HCT116 (cell line): ENCODE measurements at regions of chr3 and their contacts with region 1.

Region 1: DNA sequence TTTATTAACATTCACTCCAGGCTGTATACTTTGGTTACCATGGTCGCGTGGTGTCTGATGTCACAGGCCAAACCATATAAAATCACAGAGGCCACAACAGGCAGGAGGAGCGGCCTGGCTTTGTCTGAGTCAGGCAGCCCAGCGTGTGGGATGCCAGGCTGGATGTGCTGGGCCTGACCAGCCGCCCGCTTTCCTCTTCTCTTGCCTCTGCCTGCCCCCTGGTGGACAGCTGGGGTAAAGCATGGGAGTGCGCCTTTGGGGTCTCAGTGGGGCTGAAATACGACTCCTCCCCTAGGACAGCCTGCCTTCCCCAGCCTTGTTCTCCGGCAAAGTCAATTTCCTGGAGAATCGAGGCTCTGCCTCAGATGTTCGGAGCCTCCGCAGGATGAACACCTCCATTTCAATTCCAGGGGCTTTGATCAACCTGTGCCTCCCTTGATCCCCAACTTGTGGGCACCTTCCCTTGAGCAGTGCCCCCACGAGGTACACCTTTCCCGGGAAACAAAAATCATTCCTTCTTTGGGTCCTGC is 78.2 kb downstream of the CCNL1 start:
- DNase-seq: peak; percentile 85
- ATAC-seq: peak; percentile 92
- H3K4me3 ChIP-seq: peak overlapping the region; percentile 3 to 22; a peak in 2 of 4 replicates
- H3K27ac ChIP-seq: no peak overlapping the region
- H3K4me1 ChIP-seq: peaks cover 5 to 45% of the 10 kb centered on the region in 2 experiments
- H3K27me3 ChIP-seq: no peaks in the 10 kb centered on the region
- CTCF ChIP-seq: peak in 2 of 3 experiments; percentile 94 to 99; a peak in 4 of 6 replicates
- POLR2A ChIP-seq: no peak
- RAD21 ChIP-seq: no peak

Region 2: DNA sequence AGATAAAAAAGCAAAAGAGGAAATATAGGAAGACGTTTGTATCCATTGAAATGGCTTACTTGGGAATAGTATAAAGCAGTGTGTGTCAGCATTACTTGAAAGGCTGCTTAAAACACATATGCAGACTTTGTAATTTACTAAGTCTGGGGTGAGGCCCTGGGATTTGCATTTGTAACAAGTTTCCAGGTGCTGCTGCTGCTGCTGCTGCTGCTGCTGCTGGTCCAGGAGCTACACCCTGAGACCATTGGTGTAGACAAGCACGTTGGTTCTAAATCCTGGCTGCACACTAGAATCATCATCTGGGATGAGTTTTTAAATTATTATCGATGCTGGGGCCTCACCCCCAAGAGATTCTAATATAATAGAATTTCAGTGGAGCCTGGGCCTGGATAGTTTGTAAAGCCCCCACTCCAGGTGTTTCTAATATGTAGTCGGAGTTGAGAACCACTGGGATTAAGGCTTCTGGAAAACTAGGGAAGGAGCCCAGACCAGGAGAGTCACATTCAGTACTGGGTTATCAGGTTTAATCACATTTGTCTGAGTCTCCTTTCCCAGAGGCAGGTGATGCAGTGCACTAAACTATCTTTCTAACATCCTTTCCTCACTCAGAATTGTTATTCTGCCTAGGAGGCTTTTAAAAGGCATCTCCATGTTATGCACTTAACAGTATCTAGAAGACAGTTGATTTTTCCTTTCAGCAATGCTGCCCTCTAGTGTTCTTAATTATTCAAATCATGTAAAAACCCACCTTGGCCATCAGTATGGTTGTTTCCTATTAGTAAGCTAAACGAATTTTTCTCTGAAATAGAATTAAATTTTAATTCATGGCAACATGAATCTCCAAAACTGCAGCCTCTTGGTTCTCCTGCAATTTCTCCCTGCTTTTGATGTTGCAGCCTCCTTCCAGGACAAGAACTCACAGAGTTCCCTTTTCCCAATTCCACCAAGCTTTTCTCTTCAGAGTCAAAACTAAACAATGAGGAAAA is 572.3 kb before region 1 on chr3:
- CTCF ChIA-PET with region 1: interaction called, 4 read pairs
- POLR2A ChIA-PET with region 1: no interaction called
- RAD21 ChIA-PET with region 1: no interaction called
- intact Hi-C with region 1: loop called (anchors 1 kb)
- DNase-seq: peak; percentile 37
- ATAC-seq: peak; percentile 91
- H3K4me3 ChIP-seq: no peak overlapping the region
- H3K27ac ChIP-seq: no peak overlapping the region
- H3K4me1 ChIP-seq: peaks cover 4 to 6% of the 10 kb centered on the region in 2 experiments; a peak in 2 of 4 replicates
- H3K27me3 ChIP-seq: no peaks in the 10 kb centered on the region
- CTCF ChIP-seq: peak; percentile 30 to 81 (median 69); a peak in 5 of 6 replicates
- POLR2A ChIP-seq: no peak
- RAD21 ChIP-seq: peak; percentile 83

Region 3: GRCh38 chr3:156554842-156555687 is 526.7 kb before region 1 on chr3 and contains the start of gene SSR3:
- CTCF ChIA-PET with region 1: interaction called, 3 read pairs
- POLR2A ChIA-PET with region 1: no interaction called
- RAD21 ChIA-PET with region 1: no interaction called
- intact Hi-C with region 1: loop called (anchors 2 kb)
- DNase-seq: peak; percentile 98
- ATAC-seq: peak; percentile 99
- H3K4me3 ChIP-seq: peak within 1 kb of the TSS; percentile 77 to 95
- H3K27ac ChIP-seq: peak within 1 kb of the TSS; percentile 63
- H3K4me1 ChIP-seq: peaks cover 3 to 22% of the 10 kb centered on the region in 2 experiments; a peak in 2 of 4 replicates
- H3K27me3 ChIP-seq: no peaks in the 10 kb centered on the region
- CTCF ChIP-seq: no peak
- POLR2A ChIP-seq: peak; percentile 75
- RAD21 ChIP-seq: no peak
- total RNA-seq, gene SSR3: 177 TPM

Region 4: GRCh38 chr3:156816800-156817645 is 264.7 kb before region 1 on chr3:
- CTCF ChIA-PET with region 1: no interaction called
- POLR2A ChIA-PET with region 1: interaction called, 6 read pairs
- RAD21 ChIA-PET with region 1: interaction called in 1 of 2 experiments, 3 read pairs
- intact Hi-C with region 1: loop called (anchors 1 kb)
- DNase-seq: peak; percentile 77
- ATAC-seq: peak; percentile 75
- H3K4me3 ChIP-seq: peak overlapping the region; percentile 51 to 62
- H3K27ac ChIP-seq: peak overlapping the region; percentile 95
- H3K4me1 ChIP-seq: peaks cover 34 to 90% of the 10 kb centered on the region in 2 experiments
- H3K27me3 ChIP-seq: no peaks in the 10 kb centered on the region
- CTCF ChIP-seq: 0 out of 6 replicates have a peak, but pooled peaks of 1 of the 3 experiments have one; percentile 3
- POLR2A ChIP-seq: peak; percentile 51
- RAD21 ChIP-seq: no peak

Region 5: DNA sequence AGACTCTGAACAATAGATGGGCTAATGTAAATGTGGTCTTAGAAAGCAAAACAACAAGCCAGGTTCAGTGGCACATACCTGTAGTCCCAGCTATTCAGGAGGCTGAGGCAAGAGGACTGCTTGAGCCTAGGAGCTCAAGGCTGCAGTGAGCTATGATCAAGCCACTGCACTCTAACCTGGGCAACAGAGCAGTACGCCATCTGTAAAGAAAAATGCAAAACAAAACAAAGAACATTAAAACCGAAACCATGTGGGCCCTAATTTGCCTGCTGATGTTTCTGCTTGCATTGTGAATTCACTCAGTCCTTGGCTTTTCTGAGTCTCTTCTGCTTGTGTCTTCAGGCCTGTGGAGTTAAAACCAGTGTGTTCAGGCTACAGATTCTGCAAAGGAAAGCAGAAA is 21.5 kb after region 1 on chr3:
- CTCF ChIA-PET with region 1: no interaction called
- POLR2A ChIA-PET with region 1: no interaction called
- RAD21 ChIA-PET with region 1: no interaction called
- intact Hi-C with region 1: no loop called
- DNase-seq: no peak
- ATAC-seq: no peak
- H3K4me3 ChIP-seq: no peak overlapping the region
- H3K27ac ChIP-seq: no peak overlapping the region
- H3K4me1 ChIP-seq: peaks cover 0 to 11% of the 10 kb centered on the region in 2 experiments; a peak in 1 of 4 replicates
- H3K27me3 ChIP-seq: no peaks in the 10 kb centered on the region
- CTCF ChIP-seq: no peak
- POLR2A ChIP-seq: no peak
- RAD21 ChIP-seq: no peak